ENCODE measurements at regions of chr2 and their contacts with region 1.

Region 1: GRCh38 chr2:88739985-88740600 is 48.6 kb downstream of the RPIA start:
- DNase-seq: peak; percentile 40 to 80 (median 67)
- ATAC-seq: peak; percentile 95
- H3K4me3 ChIP-seq: no peak overlapping the region
- H3K4me3 Mint-ChIP-seq: peak overlapping the region in 4 of 10 donors; percentile 8 to 43 (median 25)
- H3K27ac ChIP-seq: no peak overlapping the region
- H3K27ac Mint-ChIP-seq: peak overlapping the region in 6 of 9 donors; percentile 66 to 84 (median 71)
- H3K4me1 ChIP-seq: peaks cover 0 to 5% of the 10 kb centered on the region in 2 donors
- H3K4me1 Mint-ChIP-seq: peaks cover 4 to 37% (median 30%) of the 10 kb centered on the region in 7 donors
- H3K27me3 ChIP-seq: no peaks in the 10 kb centered on the region
- H3K27me3 Mint-ChIP-seq: no peaks in the 10 kb centered on the region

Region 2: GRCh38 chr2:88600038-88600465 is 140.0 kb before region 1 on chr2:
- CTCF ChIA-PET with region 1: no interaction called
- POLR2A ChIA-PET with region 1: no interaction called
- intact Hi-C with region 1: no loop called
- DNase-seq: peak in 7 of 9 donors; percentile 9 to 81 (median 28)
- ATAC-seq: peak; percentile 96
- H3K4me3 ChIP-seq: no peak overlapping the region
- H3K4me3 Mint-ChIP-seq: peak overlapping the region in 1 of 10 donors; percentile 40
- H3K27ac ChIP-seq: no peak overlapping the region
- H3K27ac Mint-ChIP-seq: peak overlapping the region in 7 of 9 donors; percentile 6 to 81 (median 31)
- H3K4me1 ChIP-seq: peaks cover 0 to 5% of the 10 kb centered on the region in 2 donors
- H3K4me1 Mint-ChIP-seq: peaks cover 26 to 63% (median 53%) of the 10 kb centered on the region in 7 donors
- H3K27me3 ChIP-seq: no peaks in the 10 kb centered on the region
- H3K27me3 Mint-ChIP-seq: no peaks in the 10 kb centered on the region

Region 3: GRCh38 chr2:88753833-88754584 is 13.9 kb after region 1 on chr2:
- CTCF ChIA-PET with region 1: interaction called, 12 read pairs
- POLR2A ChIA-PET with region 1: interaction called, 6 read pairs
- intact Hi-C with region 1: loop called in 1 of 2 experiments (anchors 1 kb)
- DNase-seq: peak in 7 of 9 donors; percentile 61 to 85 (median 78)
- ATAC-seq: peak; percentile 79
- H3K4me3 ChIP-seq: peak overlapping the region; percentile 5
- H3K4me3 Mint-ChIP-seq: peak overlapping the region; percentile 33 to 87 (median 62)
- H3K27ac ChIP-seq: peak overlapping the region; percentile 84
- H3K27ac Mint-ChIP-seq: peak overlapping the region; percentile 90 to 100 (median 97)
- H3K4me1 ChIP-seq: peaks cover 0 to 60% of the 10 kb centered on the region in 2 donors
- H3K4me1 Mint-ChIP-seq: peaks cover 28 to 83% (median 70%) of the 10 kb centered on the region in 7 donors
- H3K27me3 ChIP-seq: no peaks in the 10 kb centered on the region
- H3K27me3 Mint-ChIP-seq: no peaks in the 10 kb centered on the region

Region 4: GRCh38 chr2:88831792-88832248 is 91.7 kb after region 1 on chr2:
- CTCF ChIA-PET with region 1: no interaction called
- POLR2A ChIA-PET with region 1: no interaction called
- intact Hi-C with region 1: loop called (anchors 5 kb)
- DNase-seq: peak in 5 of 9 donors; percentile 4 to 43 (median 10)
- ATAC-seq: peak; percentile 73
- H3K4me3 ChIP-seq: no peak overlapping the region
- H3K4me3 Mint-ChIP-seq: no peak overlapping the region
- H3K27ac ChIP-seq: no peak overlapping the region
- H3K27ac Mint-ChIP-seq: no peak overlapping the region
- H3K4me1 ChIP-seq: no peaks in the 10 kb centered on the region
- H3K4me1 Mint-ChIP-seq: peaks cover 0 to 4% (median 0%) of the 10 kb centered on the region in 7 donors
- H3K27me3 ChIP-seq: no peaks in the 10 kb centered on the region
- H3K27me3 Mint-ChIP-seq: peaks cover 0 to 18% (median 5%) of the 10 kb centered on the region in 5 donors

Region 5: DNA sequence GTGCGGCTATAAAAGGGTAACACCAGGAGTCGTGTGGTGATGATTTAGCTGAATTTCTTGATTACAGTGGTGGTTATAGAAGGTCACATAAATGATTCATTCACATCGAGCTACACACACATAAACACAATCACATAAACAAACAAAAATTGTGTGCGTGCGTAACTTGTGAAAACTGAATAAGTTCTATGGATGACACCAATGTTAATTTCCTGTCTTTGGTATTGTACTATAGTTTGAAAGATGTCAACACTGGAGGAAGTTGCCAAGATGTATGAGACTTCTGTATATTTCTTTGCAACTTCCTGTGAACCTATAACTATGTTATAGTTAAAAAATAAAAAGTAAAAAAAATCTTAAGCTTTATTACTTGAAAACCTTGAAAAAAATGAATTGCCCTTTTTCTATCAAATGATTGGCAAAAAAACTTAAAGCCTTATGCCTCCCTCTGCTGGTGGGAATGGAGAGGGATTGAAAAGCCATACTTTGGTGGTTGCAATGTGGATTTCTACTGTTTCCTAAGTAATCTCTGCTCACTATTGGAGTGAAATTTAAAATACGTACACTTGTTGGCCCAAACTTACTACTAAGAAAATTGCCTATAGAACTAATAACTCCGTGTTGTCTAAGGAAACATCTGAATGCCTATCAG is 179.1 kb after region 1 on chr2:
- CTCF ChIA-PET with region 1: interaction called, 3 read pairs
- POLR2A ChIA-PET with region 1: no interaction called
- intact Hi-C with region 1: loop called (anchors 1 kb)
- DNase-seq: peak in 4 of 9 donors; percentile 20 to 32 (median 22)
- ATAC-seq: peak; percentile 24
- H3K4me3 ChIP-seq: no peak overlapping the region
- H3K4me3 Mint-ChIP-seq: peak overlapping the region in 3 of 10 donors; percentile 0 to 13 (median 6)
- H3K27ac ChIP-seq: no peak overlapping the region
- H3K27ac Mint-ChIP-seq: peak overlapping the region in 1 of 9 donors; percentile 38
- H3K4me1 ChIP-seq: no peaks in the 10 kb centered on the region
- H3K4me1 Mint-ChIP-seq: peaks cover 0 to 5% (median 0%) of the 10 kb centered on the region in 7 donors
- H3K27me3 ChIP-seq: no peaks in the 10 kb centered on the region
- H3K27me3 Mint-ChIP-seq: peaks cover 7 to 26% (median 11%) of the 10 kb centered on the region in 5 donors

Region 6: GRCh38 chr2:88950010-88950409 is 209.9 kb after region 1 on chr2:
- CTCF ChIA-PET with region 1: no interaction called
- POLR2A ChIA-PET with region 1: no interaction called
- intact Hi-C with region 1: loop called in 1 of 2 experiments (anchors 1 kb)
- DNase-seq: peak in 2 of 9 donors; percentile 11 to 14
- ATAC-seq: no peak
- H3K4me3 ChIP-seq: no peak overlapping the region
- H3K4me3 Mint-ChIP-seq: no peak overlapping the region
- H3K27ac ChIP-seq: no peak overlapping the region
- H3K27ac Mint-ChIP-seq: no peak overlapping the region
- H3K4me1 ChIP-seq: no peaks in the 10 kb centered on the region
- H3K4me1 Mint-ChIP-seq: no peaks in the 10 kb centered on the region
- H3K27me3 ChIP-seq: no peaks in the 10 kb centered on the region
- H3K27me3 Mint-ChIP-seq: peaks cover 11 to 38% (median 23%) of the 10 kb centered on the region in 5 donors